ENCODE measurements at regions of chr1 and their contacts with region 1.

Region 1: DNA sequence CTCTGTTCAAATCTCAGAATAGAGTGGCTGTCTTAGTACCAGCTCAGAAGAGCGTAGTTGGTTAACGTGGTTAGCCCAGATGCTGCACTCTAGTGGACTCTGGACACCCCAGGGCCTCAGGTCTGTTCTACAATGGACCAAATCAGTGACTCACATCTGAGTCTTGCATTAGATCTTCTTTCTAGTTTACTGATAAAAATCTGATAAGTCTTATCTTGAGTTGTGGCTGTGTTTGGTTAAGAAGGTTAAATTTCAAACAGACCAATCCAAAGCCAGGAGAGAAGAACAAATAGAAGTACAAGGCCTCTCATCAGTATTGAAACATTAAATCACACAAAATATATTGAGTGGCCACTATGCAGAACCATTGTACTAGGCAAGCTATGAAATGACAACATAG is 104.1 kb downstream of the NR5A2 start:
- DNase-seq: peak; percentile 79 to 87
- H3K4me3 ChIP-seq: no peak overlapping the region
- H3K4me3 Mint-ChIP-seq: peak overlapping the region; percentile 56
- H3K27ac Mint-ChIP-seq: peak overlapping the region; percentile 55
- H3K4me1 ChIP-seq: peaks cover 47% of the 10 kb centered on the region
- H3K4me1 Mint-ChIP-seq: peaks cover 45% of the 10 kb centered on the region
- H3K27me3 ChIP-seq: no peaks in the 10 kb centered on the region
- H3K27me3 Mint-ChIP-seq: no peaks in the 10 kb centered on the region
- CTCF ChIP-seq: peak in 1 of 2 experiments; percentile 38

Region 2: GRCh38 chr1:199936441-199936840 is 195.2 kb before region 1 on chr1:
- CTCF ChIA-PET with region 1: no interaction called
- POLR2A ChIA-PET with region 1: no interaction called
- intact Hi-C with region 1: no loop called
- DNase-seq: no peak
- H3K4me3 ChIP-seq: no peak overlapping the region
- H3K4me3 Mint-ChIP-seq: no peak overlapping the region
- H3K27ac Mint-ChIP-seq: no peak overlapping the region
- H3K4me1 ChIP-seq: no peaks in the 10 kb centered on the region
- H3K4me1 Mint-ChIP-seq: no peaks in the 10 kb centered on the region
- H3K27me3 ChIP-seq: no peaks in the 10 kb centered on the region
- H3K27me3 Mint-ChIP-seq: peaks cover 5% of the 10 kb centered on the region
- CTCF ChIP-seq: no peak

Region 3: DNA sequence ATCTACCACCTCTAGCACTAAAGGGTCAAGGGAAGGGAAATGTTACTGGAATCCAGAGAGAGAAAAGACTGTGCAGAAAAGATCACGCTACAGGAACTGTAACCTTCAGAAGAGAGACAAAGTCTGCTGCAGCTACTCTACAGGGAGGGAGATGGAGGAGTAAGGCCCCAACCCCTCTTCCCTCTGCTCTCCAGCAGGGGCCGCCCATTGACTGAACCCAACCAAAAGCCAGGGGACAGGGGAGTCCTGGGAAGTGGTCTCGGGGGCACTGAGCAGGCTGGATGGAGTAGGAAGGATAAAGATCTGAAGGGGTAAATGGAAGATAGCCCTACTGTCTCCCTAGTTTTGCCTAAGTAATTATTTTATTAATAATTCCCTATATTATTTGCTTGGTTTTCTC is 176.9 kb before region 1 on chr1:
- CTCF ChIA-PET with region 1: interaction called, 4 read pairs
- POLR2A ChIA-PET with region 1: no interaction called
- intact Hi-C with region 1: loop called (anchors 2 kb)
- DNase-seq: peak; percentile 53 to 58
- H3K4me3 ChIP-seq: no peak overlapping the region
- H3K4me3 Mint-ChIP-seq: no peak overlapping the region
- H3K27ac Mint-ChIP-seq: no peak overlapping the region
- H3K4me1 ChIP-seq: 0 out of 2 replicates have a peak, but pooled peaks cover 6% of the 10 kb centered on the region
- H3K4me1 Mint-ChIP-seq: peaks cover 7% of the 10 kb centered on the region
- H3K27me3 ChIP-seq: no peaks in the 10 kb centered on the region
- H3K27me3 Mint-ChIP-seq: no peaks in the 10 kb centered on the region
- CTCF ChIP-seq: peak; percentile 59 to 82

Region 4: DNA sequence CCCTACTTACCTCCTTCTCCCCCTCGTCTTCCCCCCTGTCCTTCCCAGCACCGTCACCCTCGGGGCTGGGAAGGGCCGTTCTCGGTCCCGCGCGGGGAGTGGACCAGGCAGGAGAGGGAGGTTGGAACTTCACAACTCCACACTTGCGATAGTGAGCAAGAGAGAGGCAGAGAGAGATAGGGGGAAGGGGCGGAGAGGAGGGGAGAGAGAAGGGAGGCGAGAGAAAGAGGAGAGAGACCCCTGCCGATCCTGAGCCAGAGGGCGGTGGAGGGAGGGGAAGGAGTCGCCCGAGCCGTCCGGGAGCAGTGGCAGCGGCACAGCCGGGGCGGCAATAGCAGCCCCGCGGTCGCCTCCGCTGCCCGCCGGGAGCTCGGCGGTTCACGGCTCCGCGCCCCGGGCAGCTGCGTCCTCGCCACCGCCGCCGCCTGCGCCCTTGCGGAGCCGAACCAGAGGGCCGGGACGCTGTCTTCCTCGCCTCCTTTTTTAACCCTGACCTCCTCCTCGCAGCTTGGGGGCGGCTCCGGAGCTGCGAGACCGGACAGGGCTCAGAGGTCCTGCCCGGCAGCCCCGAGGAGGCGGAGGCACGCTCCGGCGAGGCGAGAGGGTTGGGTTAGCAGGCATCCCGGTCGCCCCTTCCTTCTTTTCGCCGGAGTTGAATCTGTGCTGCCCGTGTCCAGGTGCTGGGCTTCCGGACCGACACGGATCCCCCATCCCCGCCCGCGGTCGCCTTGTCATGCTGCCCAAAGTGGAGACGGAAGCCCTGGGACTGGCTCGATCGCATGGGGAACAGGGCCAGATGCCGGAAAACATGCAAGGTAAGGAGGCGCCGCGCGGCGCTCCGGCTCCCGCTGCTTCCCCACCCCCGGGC is 92.4 kb before region 1 on chr1:
- CTCF ChIA-PET with region 1: no interaction called
- POLR2A ChIA-PET with region 1: no interaction called
- intact Hi-C with region 1: loop called (anchors 2 kb)
- DNase-seq: peak; percentile 54 to 55
- H3K4me3 ChIP-seq: peak overlapping the region; percentile 69
- H3K4me3 Mint-ChIP-seq: peak overlapping the region; percentile 95
- H3K27ac Mint-ChIP-seq: no peak overlapping the region
- H3K4me1 ChIP-seq: 0 out of 2 replicates have a peak, but pooled peaks cover 4% of the 10 kb centered on the region
- H3K4me1 Mint-ChIP-seq: peaks cover 13% of the 10 kb centered on the region
- H3K27me3 ChIP-seq: no peaks in the 10 kb centered on the region
- H3K27me3 Mint-ChIP-seq: no peaks in the 10 kb centered on the region
- CTCF ChIP-seq: no peak

Region 5: GRCh38 chr1:200090252-200091096 is 41.1 kb before region 1 on chr1:
- CTCF ChIA-PET with region 1: no interaction called
- POLR2A ChIA-PET with region 1: no interaction called
- intact Hi-C with region 1: loop called (anchors 1 kb)
- DNase-seq: peak in 1 of 2 experiments; percentile 34
- H3K4me3 ChIP-seq: no peak overlapping the region
- H3K4me3 Mint-ChIP-seq: no peak overlapping the region
- H3K27ac Mint-ChIP-seq: no peak overlapping the region
- H3K4me1 ChIP-seq: no peaks in the 10 kb centered on the region
- H3K4me1 Mint-ChIP-seq: no peaks in the 10 kb centered on the region
- H3K27me3 ChIP-seq: no peaks in the 10 kb centered on the region
- H3K27me3 Mint-ChIP-seq: no peaks in the 10 kb centered on the region
- CTCF ChIP-seq: peak; percentile 40 to 45

Region 6: GRCh38 chr1:200107004-200107470 is 24.6 kb before region 1 on chr1:
- CTCF ChIA-PET with region 1: no interaction called
- POLR2A ChIA-PET with region 1: no interaction called
- intact Hi-C with region 1: loop called (anchors 1 kb)
- DNase-seq: no peak
- H3K4me3 ChIP-seq: no peak overlapping the region
- H3K4me3 Mint-ChIP-seq: no peak overlapping the region
- H3K27ac Mint-ChIP-seq: no peak overlapping the region
- H3K4me1 ChIP-seq: peaks cover 20% of the 10 kb centered on the region
- H3K4me1 Mint-ChIP-seq: peaks cover 30% of the 10 kb centered on the region
- H3K27me3 ChIP-seq: no peaks in the 10 kb centered on the region
- H3K27me3 Mint-ChIP-seq: no peaks in the 10 kb centered on the region
- CTCF ChIP-seq: no peak

Measured in Caco-2 (cell line).